ENCODE measurements at regions of chr19 and their contacts with region 1.

Region 1: GRCh38 chr19:1094975-1095701 is at the start of gene POLR2E:
- DNase-seq: peak; percentile 96
- CTCF ChIP-seq: no peak

Region 2: GRCh38 chr19:1084024-1084868 is 10.9 kb before region 1 on chr19:
- CTCF ChIA-PET with region 1: interaction called, 10 read pairs
- POLR2A ChIA-PET with region 1: interaction called, 4 read pairs
- DNase-seq: no peak
- CTCF ChIP-seq: no peak